Mammary epithelial cell (primary cell): ENCODE measurements at regions of chr7 and their contacts with region 1.

Region 1: GRCh38 chr7:107168233-107169119 is at the start of gene HBP1:
- DNase-seq: peak; percentile 100
- H3K4me3 ChIP-seq: peak within 1 kb of the TSS; percentile 78 to 97 (median 82)
- H3K27ac ChIP-seq: peak within 1 kb of the TSS; percentile 88
- H3K4me1 ChIP-seq: no peaks in the 10 kb centered on the region
- H3K27me3 ChIP-seq: no peaks in the 10 kb centered on the region
- CTCF ChIP-seq: no peak
- total RNA-seq, gene HBP1: 23.6 to 52.3 TPM

Region 2: DNA sequence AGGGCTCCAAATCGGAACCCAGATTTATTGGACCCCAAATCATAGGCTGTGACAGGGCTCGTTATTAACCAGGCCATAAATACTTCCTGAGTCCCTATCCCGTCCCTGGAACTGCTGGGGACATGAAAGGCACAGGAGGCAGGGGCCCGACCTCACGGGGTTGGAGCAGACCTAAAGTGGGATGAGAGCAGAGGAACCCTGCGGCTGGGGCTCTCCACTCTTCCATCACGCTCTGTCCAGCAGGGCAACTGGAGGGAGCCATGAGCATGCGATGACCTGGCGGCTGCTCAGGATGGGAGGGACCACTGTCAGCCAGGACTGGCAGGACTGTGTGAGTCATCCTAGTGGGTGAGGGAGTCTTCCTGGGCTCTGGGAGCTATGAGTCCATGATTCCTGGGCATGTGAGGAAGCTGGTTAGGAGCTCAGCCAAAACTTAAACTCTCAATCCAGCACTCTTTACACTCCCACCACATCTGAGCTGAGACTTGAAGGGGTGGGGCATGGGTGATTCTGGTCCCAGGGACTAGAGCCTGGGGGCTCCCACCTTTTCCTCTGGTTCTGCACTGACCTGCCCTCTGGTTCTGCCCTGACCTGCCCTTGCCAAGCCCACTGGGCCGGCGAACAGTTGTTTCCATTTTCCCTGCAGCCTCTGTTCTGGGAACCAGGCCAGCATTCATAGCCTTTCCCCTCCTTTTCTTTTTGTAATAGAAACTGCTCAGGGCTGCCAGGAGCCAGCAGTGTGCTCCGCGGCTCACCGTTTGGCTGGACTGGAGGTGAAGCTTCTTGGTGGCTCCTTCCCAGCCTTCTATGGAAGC is 1103.5 kb before region 1 on chr7:
- CTCF ChIA-PET with region 1: no interaction called
- dilution Hi-C with region 1: no loop called
- in situ Hi-C with region 1: no loop called
- intact Hi-C with region 1: loop called (anchors 10 kb)
- DNase-seq: peak; percentile 99
- H3K4me3 ChIP-seq: peak overlapping the region; percentile 15 to 22 (median 18)
- H3K27ac ChIP-seq: peak overlapping the region; percentile 85
- H3K4me1 ChIP-seq: peaks cover 76% of the 10 kb centered on the region
- H3K27me3 ChIP-seq: no peaks in the 10 kb centered on the region
- CTCF ChIP-seq: peak in 1 of 2 donors; percentile 6

Region 3: DNA sequence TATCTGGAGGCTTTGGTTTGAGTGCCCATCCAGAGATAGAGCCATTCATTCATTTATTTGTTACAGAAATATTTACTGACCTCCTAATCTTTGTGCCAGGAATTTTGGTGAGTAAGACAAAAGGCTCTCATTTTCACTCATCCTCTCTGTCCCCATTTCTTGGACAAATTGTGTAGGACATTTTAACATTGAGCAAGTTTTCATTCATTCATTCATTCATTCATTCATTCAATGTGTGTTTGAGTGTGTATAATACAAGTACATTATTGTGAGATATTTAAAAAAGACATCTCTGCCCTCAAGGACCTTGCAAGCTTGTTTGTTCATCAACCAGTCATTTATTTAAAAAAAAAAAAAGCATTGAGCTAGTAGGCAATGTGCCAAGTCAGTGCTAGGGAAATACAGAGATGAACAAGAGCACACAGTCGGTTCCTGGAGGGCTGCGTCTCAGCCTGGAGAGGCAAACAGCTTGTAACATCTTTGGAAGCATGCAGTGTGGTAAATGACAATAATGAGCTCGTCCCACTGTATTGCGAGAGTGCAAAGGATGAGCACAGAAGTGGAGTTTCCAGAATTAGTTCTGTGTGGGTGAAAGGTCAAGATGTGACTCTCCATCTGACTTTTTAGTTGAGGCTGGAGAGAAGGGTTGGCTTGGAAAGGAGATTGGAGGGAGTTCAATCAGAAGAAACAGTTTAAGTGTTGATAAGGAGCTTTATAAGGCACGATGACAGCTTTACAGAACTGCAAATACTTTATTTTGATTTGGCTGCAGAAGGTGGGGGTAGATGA is 50.2 kb before region 1 on chr7:
- CTCF ChIA-PET with region 1: no interaction called
- dilution Hi-C with region 1: no loop called
- in situ Hi-C with region 1: no loop called
- intact Hi-C with region 1: no loop called
- DNase-seq: no peak
- H3K4me3 ChIP-seq: no peak overlapping the region
- H3K27ac ChIP-seq: no peak overlapping the region
- H3K4me1 ChIP-seq: no peaks in the 10 kb centered on the region
- H3K27me3 ChIP-seq: no peaks in the 10 kb centered on the region
- CTCF ChIP-seq: no peak

Region 4: GRCh38 chr7:107150375-107151073 is 18.0 kb before region 1 on chr7:
- CTCF ChIA-PET with region 1: no interaction called
- dilution Hi-C with region 1: no loop called
- in situ Hi-C with region 1: no loop called
- intact Hi-C with region 1: loop called (anchors 1 kb)
- DNase-seq: peak; percentile 44
- H3K4me3 ChIP-seq: no peak overlapping the region
- H3K27ac ChIP-seq: no peak overlapping the region
- H3K4me1 ChIP-seq: peaks cover 13% of the 10 kb centered on the region
- H3K27me3 ChIP-seq: no peaks in the 10 kb centered on the region
- CTCF ChIP-seq: peak; percentile 50 to 58

Region 5: DNA sequence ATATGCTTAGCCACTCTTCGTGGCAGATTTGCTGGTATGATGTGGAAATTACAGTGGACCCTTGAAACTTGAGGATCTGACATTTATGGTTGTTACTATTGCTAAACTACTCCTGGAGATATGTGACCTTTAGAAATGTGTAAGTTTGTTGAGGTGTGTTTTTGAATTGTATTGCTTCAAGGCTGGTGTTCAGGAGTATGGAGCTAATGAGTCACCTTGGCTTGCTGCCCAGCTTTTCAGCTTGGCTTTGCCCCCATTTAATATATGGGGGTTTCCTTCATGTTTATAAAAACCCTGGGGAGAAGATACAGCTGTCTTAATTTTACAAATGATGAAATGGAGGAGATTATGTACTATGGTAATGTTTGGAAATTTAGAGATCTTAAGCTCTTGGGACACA is 11.9 kb after region 1 on chr7:
- CTCF ChIA-PET with region 1: interaction called, 24 read pairs
- dilution Hi-C with region 1: no loop called
- in situ Hi-C with region 1: no loop called
- intact Hi-C with region 1: loop called (anchors 1 kb)
- DNase-seq: peak; percentile 84
- H3K4me3 ChIP-seq: no peak overlapping the region
- H3K27ac ChIP-seq: peak overlapping the region; percentile 54
- H3K4me1 ChIP-seq: peaks cover 17% of the 10 kb centered on the region
- H3K27me3 ChIP-seq: no peaks in the 10 kb centered on the region
- CTCF ChIP-seq: no peak

Region 6: DNA sequence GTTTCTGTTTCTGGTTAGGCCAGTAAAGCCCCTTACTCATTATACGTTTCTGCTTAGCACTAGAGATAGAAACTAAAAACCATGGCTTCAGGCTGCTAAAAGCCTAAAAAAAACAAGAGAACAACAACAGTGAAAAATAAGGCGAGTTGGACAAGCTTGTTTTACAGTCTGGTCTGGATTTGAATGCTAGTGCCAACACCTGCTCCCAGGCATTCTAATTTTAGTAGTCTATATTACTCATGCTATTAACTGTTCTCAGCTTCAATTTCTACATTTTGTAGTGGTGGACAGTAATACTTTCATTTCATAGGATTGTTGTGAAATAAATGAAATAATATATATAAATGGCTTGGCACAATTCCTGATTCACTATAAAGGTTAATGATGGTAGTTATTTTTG is 108.9 kb after region 1 on chr7:
- CTCF ChIA-PET with region 1: no interaction called
- dilution Hi-C with region 1: no loop called
- in situ Hi-C with region 1: no loop called
- intact Hi-C with region 1: no loop called
- DNase-seq: no peak
- H3K4me3 ChIP-seq: no peak overlapping the region
- H3K27ac ChIP-seq: no peak overlapping the region
- H3K4me1 ChIP-seq: no peaks in the 10 kb centered on the region
- H3K27me3 ChIP-seq: no peaks in the 10 kb centered on the region
- CTCF ChIP-seq: no peak

Region 7: DNA sequence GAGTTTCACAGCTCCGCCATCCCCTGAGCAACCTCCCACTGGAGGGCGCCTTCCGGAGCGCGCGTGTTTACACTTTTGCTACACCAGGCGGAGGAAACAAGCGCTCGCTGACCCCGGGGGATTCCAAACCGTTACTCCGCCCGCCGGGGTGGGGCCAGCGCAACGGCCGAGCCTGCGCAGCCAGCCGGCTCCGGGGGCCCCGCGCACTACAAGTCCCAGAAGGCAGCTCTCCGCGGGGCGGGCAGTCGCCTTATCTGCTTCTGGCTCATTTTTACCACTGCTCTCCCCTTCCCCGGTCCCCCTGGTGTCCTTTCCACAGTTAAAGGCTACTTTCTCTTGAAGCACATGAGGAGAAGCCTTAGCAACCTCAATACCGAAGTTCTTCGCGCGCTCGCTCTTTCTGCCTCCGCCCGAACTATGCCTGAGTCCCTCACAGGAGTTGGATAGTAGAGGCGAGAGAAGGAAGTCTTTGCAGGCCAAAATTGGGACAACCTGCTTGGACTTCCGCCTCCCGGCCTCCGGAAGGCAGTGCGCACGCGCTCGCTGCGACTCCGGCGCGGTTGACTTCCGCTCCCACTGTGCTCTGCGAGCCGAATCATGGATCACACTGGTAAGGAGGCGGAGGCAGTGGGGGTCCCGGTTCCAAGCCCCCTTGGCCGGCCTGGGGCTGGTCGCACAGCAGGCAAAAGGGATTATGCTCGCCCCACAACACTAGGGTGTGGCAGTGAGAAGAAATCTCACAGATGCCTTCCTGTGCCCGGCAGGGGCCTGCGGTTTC is 575.3 kb after region 1 on chr7 and contains the start of gene CBLL1:
- CTCF ChIA-PET with region 1: no interaction called
- dilution Hi-C with region 1: no loop called
- in situ Hi-C with region 1: no loop called
- intact Hi-C with region 1: loop called (anchors 1 kb)
- DNase-seq: peak; percentile 94
- H3K4me3 ChIP-seq: peak within 1 kb of the TSS; percentile 75 to 99 (median 93)
- H3K27ac ChIP-seq: peak within 1 kb of the TSS; percentile 75
- H3K4me1 ChIP-seq: peaks cover 20% of the 10 kb centered on the region
- H3K27me3 ChIP-seq: no peaks in the 10 kb centered on the region
- CTCF ChIP-seq: peak; percentile 37 to 76
- total RNA-seq, gene CBLL1: 26.9 to 37.8 TPM